Gastrocnemius medialis (tissue), 4 donors: ENCODE measurements at regions of chr7 and their contacts with region 1.

Region 1: GRCh38 chr7:156640257-156640948 is at the start of gene RNF32:
- DNase-seq: peak; percentile 75 to 76
- ATAC-seq: peak; percentile 89
- H3K4me3 ChIP-seq: peak within 1 kb of the TSS; percentile 67 to 93 (median 79)
- H3K27ac ChIP-seq: peak within 1 kb of the TSS; percentile 56 to 91 (median 72)
- H3K4me1 ChIP-seq: peaks cover 0 to 11% of the 10 kb centered on the region in 2 donors
- H3K27me3 ChIP-seq: peaks cover 5 to 9% (median 5%) of the 10 kb centered on the region in 3 donors
- CTCF ChIP-seq: no peak
- POLR2A ChIP-seq: peak; percentile 33 to 58
- total RNA-seq, gene RNF32: 0.85 TPM in 1 of 4 donors, not detected in the others

Region 2: GRCh38 chr7:156117542-156118247 is 522.7 kb before region 1 on chr7:
- in situ Hi-C with region 1: no loop called
- intact Hi-C with region 1: no loop called
- DNase-seq: no peak
- ATAC-seq: no peak
- H3K4me3 ChIP-seq: no peak overlapping the region
- H3K27ac ChIP-seq: no peak overlapping the region
- H3K4me1 ChIP-seq: no peaks in the 10 kb centered on the region
- H3K27me3 ChIP-seq: no peaks in the 10 kb centered on the region
- CTCF ChIP-seq: no peak
- POLR2A ChIP-seq: no peak

Region 3: DNA sequence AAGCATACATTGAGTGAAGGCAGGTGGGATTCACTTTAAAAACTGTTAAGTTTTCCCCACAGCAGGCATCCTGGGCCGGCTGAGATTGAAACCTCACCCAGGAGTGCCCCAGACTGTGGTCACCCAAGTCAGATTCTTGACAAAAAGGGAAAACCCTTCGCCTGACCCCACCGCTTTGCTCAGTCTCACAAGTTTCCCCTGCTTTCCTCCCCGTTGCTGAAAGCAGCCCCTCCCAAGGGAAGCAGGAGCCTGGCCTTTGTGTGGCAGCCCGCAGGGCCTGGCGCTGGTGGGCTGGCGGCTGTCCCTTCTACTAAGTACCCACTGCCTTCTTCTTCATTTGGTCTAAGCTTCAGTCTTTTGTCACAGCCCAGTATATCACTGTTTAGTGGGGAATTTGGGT is 16.2 kb after region 1 on chr7:
- in situ Hi-C with region 1: no loop called
- intact Hi-C with region 1: no loop called
- DNase-seq: no peak
- ATAC-seq: no peak
- H3K4me3 ChIP-seq: no peak overlapping the region
- H3K27ac ChIP-seq: no peak overlapping the region
- H3K4me1 ChIP-seq: no peaks in the 10 kb centered on the region
- H3K27me3 ChIP-seq: peaks cover 4 to 22% (median 6%) of the 10 kb centered on the region in 3 donors
- CTCF ChIP-seq: no peak
- POLR2A ChIP-seq: no peak

Region 4: GRCh38 chr7:156680281-156680680 is 39.9 kb after region 1 on chr7:
- in situ Hi-C with region 1: no loop called
- intact Hi-C with region 1: no loop called
- DNase-seq: no peak
- ATAC-seq: no peak
- H3K4me3 ChIP-seq: no peak overlapping the region
- H3K27ac ChIP-seq: no peak overlapping the region
- H3K4me1 ChIP-seq: no peaks in the 10 kb centered on the region
- H3K27me3 ChIP-seq: no peaks in the 10 kb centered on the region
- CTCF ChIP-seq: no peak
- POLR2A ChIP-seq: no peak

Region 5: DNA sequence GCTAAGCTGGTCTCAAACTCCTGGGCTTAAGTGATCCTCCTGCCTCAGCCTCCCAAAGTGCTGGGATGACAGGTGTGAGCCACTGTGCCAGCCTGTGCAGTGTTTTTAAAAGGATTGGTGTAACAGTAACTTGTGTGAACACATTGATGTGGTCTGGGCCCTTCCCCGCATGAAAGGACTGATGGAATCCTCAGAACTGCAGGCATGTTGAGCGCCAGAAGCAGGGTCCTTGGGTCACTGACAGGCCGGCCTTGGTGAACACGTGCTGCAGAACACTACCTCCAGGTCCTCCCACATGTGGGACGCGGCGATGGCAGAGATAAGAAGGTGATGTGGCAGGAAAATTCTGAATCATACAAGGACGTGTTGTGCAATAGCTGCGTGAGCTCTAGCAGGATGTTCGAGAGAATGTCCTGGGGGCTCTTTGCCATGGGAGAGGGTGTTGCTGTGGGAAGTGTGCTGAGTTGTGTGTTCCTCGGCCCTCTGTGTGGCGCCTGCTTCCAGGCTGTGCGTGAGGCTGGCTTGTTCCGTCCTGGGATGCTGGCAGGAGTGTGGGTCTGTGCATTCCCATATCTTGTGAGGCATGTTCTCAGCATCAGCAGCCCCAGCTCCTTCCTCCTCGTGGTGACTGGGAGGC is 764.6 kb after region 1 on chr7:
- in situ Hi-C with region 1: no loop called
- intact Hi-C with region 1: loop called (anchors 5 kb)
- DNase-seq: peak in 1 of 2 donors; percentile 59
- ATAC-seq: peak; percentile 34 to 47
- H3K4me3 ChIP-seq: no peak overlapping the region
- H3K27ac ChIP-seq: peak overlapping the region; percentile 64 to 81 (median 77)
- H3K4me1 ChIP-seq: peaks cover 23 to 37% of the 10 kb centered on the region in 2 donors
- H3K27me3 ChIP-seq: no peaks in the 10 kb centered on the region
- CTCF ChIP-seq: no peak
- POLR2A ChIP-seq: no peak